ENCODE measurements at regions of chr22 and their contacts with region 1.

Region 1: DNA sequence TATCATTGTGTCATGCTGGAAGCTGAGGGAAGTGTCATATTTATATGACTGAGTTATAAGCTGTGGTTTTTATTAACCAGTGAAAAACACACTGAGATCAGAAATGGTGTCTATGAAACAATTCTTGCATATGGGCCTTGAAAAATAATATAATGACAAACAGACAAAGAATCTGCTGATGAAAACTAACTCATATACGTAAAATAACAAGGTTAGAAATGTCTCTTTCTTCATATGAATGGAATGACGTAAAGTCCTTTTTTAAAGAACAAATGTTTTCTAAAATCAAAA is 48.8 kb upstream of the PHF21B start:
- DNase-seq: no peak
- H3K4me3 ChIP-seq: no peak overlapping the region
- H3K27ac ChIP-seq: no peak overlapping the region
- H3K27me3 ChIP-seq: peaks cover 29% of the 10 kb centered on the region
- CTCF ChIP-seq: no peak

Region 2: GRCh38 chr22:46714550-46714949 is 1656.0 kb after region 1 on chr22:
- CTCF ChIA-PET with region 1: no interaction called
- POLR2A ChIA-PET with region 1: interaction called, 15 read pairs
- DNase-seq: no peak
- H3K4me3 ChIP-seq: no peak overlapping the region
- H3K27ac ChIP-seq: no peak overlapping the region
- H3K27me3 ChIP-seq: no peaks in the 10 kb centered on the region
- CTCF ChIP-seq: no peak